Head of caudate nucleus (tissue), 42 donors: ENCODE measurements at regions of chr4 and their contacts with region 1.

Region 1: GRCh38 chr4:95124906-95125504 is 367.2 kb downstream of the BMPR1B start:
- DNase-seq: peak in 28 of 42 donors; percentile 5 to 72 (median 40)

Region 2: DNA sequence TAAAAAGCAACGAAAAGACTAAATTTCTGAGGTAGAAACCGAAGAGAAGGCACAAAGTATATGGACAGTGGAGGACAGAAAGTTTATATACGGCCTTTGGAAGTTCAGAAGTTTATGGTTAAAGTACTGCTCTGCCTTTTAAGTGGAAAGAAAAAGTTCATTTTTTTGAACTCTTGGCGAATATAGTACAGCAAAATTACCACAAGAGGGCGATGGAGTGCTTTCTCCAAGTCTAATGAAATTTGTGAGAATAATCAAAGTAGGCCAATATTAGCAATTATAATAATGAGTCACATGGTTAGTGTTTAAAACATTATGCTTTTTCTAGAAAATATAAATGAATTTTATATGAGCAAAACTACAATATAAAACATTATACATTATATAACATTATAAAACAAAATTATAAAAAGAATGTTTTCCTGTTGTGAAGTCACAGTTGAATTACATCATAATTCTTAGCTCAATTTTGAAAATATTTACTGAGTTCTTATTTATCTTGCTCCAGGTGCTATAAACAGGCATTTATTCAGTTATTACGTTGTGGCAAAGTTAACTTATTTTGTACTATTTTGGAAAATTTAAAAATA is 503.4 kb before region 1 on chr4:
- intact Hi-C with region 1: loop called (anchors 10 kb)
- DNase-seq: peak in 17 of 42 donors; percentile 16 to 72 (median 32)